ENCODE measurements at regions of chr11 and their contacts with region 1.

Region 1: GRCh38 chr11:96424693-96425092 is 34.9 kb downstream of the JRKL start:
- DNase-seq: no peak
- H3K4me3 ChIP-seq: no peak overlapping the region
- H3K27ac ChIP-seq: no peak overlapping the region
- H3K4me1 ChIP-seq: peaks cover 3% of the 10 kb centered on the region
- H3K27me3 ChIP-seq: no peaks in the 10 kb centered on the region
- CTCF ChIP-seq: no peak

Region 2: GRCh38 chr11:95764267-95764898 is 660.3 kb before region 1 on chr11:
- CTCF ChIA-PET with region 1: no interaction called
- dilution Hi-C with region 1: no loop called
- in situ Hi-C with region 1: no loop called
- intact Hi-C with region 1: loop called (anchors 2 kb)
- DNase-seq: peak; percentile 37
- H3K4me3 ChIP-seq: no peak overlapping the region
- H3K27ac ChIP-seq: no peak overlapping the region
- H3K4me1 ChIP-seq: peaks cover 8% of the 10 kb centered on the region
- H3K27me3 ChIP-seq: no peaks in the 10 kb centered on the region
- CTCF ChIP-seq: peak; percentile 45 to 61

Region 3: DNA sequence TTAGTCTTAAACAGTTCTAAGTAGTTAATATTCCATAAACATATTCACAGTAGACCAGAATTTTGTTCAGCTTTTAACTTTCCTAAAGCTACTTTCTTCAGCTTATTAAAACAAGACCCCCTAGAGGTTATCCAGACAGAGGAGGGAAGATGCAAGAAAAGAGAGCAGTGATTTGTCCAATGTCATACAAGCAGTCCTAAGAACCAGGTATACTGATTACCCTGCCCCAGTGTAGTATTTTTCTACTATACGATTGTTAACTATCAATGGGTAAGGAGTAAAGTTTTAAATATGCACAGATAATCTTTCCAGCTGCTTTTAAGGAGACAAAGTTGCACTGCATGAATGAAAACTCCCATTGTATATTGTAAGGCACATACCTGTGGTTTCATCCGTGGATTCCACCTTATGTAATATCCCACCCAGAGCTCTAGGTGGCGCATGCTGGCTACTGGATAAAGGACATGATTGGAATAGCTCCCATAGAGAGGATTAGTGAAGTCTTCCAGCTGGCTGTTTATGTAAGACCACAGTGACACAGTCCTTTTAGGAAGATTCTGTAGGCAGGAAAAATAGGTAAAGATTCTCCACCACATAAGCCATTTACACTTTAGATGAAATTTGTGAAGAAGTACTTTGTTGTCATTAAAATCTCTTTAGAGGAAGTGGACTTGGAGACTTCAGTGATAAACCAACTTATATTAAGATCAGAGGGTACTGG is 588.8 kb before region 1 on chr11:
- CTCF ChIA-PET with region 1: no interaction called
- dilution Hi-C with region 1: no loop called
- in situ Hi-C with region 1: no loop called
- intact Hi-C with region 1: loop called (anchors 1 kb)
- DNase-seq: peak; percentile 81
- H3K4me3 ChIP-seq: no peak overlapping the region
- H3K27ac ChIP-seq: peak overlapping the region; percentile 14
- H3K4me1 ChIP-seq: no peaks in the 10 kb centered on the region
- H3K27me3 ChIP-seq: no peaks in the 10 kb centered on the region
- CTCF ChIP-seq: peak; percentile 93 to 98

Region 4: DNA sequence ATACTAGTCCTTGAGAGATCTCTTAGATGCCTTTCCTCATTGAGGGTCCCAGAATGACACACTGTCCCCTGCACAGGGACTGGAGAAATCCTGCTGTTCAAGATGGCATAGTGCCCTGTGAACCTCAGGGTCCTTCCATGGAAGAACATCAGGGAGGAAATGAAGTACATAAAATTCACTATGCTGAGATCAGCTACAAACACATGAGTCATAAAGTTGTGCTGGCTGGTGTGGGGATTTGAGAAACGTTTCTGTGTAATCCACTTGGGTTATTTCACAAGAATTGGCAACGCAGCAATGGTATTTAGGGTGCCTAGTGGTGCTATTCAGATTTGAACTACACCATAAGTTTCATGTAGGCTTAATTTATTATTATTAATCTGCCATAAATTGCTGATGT is 256.1 kb before region 1 on chr11:
- CTCF ChIA-PET with region 1: interaction called, 13 read pairs
- dilution Hi-C with region 1: no loop called
- in situ Hi-C with region 1: no loop called
- intact Hi-C with region 1: no loop called
- DNase-seq: peak; percentile 83
- H3K4me3 ChIP-seq: no peak overlapping the region
- H3K27ac ChIP-seq: peak overlapping the region; percentile 73
- H3K4me1 ChIP-seq: peaks cover 19% of the 10 kb centered on the region
- H3K27me3 ChIP-seq: no peaks in the 10 kb centered on the region
- CTCF ChIP-seq: peak in 1 of 2 donors; percentile 9